AG04449 (cell line): ENCODE measurements at regions of chr2 and their contacts with region 1.

Region 1: DNA sequence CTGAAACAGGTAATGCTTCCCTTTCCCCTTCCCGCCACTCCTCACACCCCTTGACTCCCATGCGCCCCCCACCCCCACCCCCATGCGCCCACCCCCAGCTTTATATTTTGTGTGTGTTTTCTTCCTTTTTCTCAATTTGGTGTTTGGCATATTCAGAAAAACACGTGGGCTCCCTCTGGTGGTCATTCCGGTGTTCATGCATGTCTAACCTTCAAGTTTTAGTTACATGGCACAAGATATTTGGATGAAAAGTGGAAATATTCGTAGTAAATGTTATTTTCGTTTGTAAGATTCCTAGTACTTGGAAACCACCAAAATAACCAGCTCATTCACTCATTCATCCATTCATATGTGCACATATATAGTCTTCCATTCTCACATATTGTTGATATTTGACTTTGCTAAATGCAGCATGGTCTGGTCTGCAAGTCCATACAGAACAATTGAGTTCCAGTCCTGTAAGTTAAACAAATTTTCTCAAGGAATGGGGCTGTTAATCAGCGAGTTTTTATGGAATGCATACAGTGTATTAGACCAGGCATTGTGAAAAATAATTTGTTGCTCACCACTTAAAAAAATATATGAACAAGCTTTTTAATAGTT is 143.6 kb upstream of the MAP3K20 start:
- DNase-seq: no peak
- H3K4me3 ChIP-seq: no peak overlapping the region
- CTCF ChIP-seq: peak; percentile 64

Region 2: DNA sequence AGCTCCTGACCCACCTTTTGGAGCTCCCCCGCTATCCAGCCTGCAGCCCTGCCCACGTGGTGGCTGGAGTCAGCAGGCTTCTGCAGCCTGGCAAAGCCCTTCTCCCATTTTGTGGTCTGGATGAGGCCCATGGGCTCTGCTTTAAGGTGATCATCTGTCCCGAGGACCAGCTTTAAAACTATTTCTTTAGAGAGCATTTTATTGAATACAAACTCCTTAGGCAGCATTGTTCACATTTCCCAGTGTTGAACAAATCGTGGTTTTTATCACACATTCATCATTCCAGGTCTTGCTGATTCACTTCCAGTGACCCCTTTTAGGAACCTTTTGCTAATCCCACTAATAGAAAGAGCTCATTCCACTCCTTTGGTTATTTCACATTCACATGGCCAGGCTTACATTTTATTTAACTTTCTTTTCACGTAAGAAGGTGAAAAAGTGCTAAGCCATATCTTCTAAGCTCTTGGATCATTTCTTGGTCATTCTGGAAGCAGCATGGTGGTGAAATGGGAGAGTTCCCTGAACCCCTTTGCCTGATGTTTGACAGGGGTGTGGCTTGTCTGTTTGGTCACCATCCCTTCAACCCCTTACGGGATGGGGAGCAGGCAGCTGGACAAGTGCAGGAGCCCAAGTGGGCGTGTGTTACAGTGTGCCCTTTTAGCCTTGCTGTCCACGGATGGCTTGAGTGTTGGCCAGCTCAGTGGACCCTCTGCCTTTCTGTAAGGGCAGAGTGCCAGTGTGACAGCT is 276.8 kb before region 1 on chr2:
- CTCF ChIA-PET with region 1: no interaction called
- POLR2A ChIA-PET with region 1: no interaction called
- DNase-seq: peak; percentile 59
- H3K4me3 ChIP-seq: no peak overlapping the region
- CTCF ChIP-seq: no peak

Region 3: DNA sequence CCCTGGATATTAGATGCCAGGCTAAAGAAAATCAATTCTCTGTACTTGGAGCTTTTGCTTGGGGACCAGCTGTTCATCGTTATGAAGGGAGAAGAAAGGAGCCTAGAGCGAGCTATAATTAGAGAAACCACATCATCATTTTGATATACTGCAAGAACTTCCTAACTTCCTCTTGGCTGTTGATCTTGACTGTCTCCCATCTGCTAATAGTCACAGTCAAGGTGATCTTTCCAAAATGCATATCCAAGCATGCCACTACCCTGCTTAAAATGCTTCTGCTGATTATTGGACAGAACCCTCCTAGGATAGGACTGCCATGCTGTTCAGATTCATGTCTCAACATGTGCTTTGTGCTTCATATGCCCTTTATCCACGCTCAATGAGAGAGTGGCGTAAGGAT is 141.6 kb before region 1 on chr2:
- CTCF ChIA-PET with region 1: interaction called, 23 read pairs
- POLR2A ChIA-PET with region 1: no interaction called
- DNase-seq: no peak
- H3K4me3 ChIP-seq: no peak overlapping the region
- CTCF ChIP-seq: no peak

Region 4: DNA sequence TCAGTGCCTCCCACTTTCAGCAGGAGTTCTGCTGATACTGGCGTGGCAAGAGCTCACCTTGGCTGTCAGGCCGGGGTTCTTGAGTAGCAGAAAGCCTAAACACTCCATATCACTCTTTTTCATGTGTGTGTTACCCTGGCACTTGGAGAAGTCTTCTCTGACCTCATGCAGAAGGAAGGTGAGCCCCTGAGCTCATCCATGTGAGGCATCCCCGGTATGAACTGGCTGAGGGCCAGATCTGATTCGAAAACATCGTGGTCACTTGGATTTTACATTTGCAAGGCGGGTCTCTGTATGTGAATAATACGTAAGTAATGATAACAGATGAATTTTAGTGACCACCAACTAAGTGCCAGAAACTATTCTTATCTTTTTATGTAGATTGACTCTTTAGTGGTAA is 102.8 kb before region 1 on chr2:
- CTCF ChIA-PET with region 1: interaction called, 29 read pairs
- POLR2A ChIA-PET with region 1: no interaction called
- DNase-seq: peak; percentile 77
- H3K4me3 ChIP-seq: no peak overlapping the region
- CTCF ChIP-seq: no peak

Region 5: GRCh38 chr2:172869861-172870260 is 62.2 kb before region 1 on chr2:
- CTCF ChIA-PET with region 1: interaction called, 98 read pairs
- POLR2A ChIA-PET with region 1: no interaction called
- DNase-seq: no peak
- H3K4me3 ChIP-seq: no peak overlapping the region
- CTCF ChIP-seq: no peak

Region 6: GRCh38 chr2:172905937-172906811 is 25.8 kb before region 1 on chr2:
- CTCF ChIA-PET with region 1: interaction called, 37 read pairs
- POLR2A ChIA-PET with region 1: no interaction called
- DNase-seq: no peak
- H3K4me3 ChIP-seq: no peak overlapping the region
- CTCF ChIP-seq: no peak

Region 7: DNA sequence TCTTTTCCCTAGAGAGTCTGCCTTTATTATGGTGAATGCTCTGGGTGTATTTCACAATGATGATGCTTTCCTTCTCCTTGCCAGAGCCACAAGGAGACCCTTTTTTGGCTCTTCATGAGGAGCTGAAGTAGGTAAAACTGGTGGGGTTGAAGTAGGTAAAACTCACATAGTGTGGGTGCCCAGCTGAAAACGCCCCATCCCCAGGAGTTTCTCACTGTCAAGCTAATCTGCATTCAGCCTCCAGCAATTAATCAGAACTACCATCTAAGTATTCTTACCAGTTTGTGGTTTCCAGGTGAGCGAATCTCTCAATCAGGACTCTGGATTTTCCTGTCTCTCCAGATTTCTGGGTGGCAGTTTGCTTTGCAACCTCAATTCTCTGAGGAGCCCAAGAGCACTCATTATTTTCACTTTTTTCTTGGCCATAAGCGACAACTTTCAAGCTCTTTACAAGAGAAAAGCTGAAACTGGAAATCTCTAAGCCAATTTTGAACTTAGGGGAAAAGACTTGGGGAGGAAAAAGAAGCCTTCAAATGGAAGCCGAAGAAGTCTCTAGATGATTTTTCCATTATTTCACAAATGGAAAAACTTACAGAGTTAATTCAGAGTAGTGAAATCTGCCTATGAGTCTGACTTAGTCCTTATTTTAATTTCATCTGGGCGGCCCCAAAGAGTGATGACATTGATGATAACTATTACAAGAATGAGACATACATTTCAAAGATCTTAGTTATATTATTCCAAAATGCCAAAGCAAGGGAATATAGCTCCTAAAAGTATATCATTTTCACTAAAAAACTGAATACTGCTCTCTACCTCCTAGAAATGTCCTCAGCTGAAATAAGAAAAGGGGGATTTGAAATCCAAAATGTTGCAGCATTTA is 22.2 kb after region 1 on chr2:
- CTCF ChIA-PET with region 1: interaction called, 51 read pairs
- POLR2A ChIA-PET with region 1: no interaction called
- DNase-seq: no peak
- H3K4me3 ChIP-seq: no peak overlapping the region
- CTCF ChIP-seq: no peak

Region 8: DNA sequence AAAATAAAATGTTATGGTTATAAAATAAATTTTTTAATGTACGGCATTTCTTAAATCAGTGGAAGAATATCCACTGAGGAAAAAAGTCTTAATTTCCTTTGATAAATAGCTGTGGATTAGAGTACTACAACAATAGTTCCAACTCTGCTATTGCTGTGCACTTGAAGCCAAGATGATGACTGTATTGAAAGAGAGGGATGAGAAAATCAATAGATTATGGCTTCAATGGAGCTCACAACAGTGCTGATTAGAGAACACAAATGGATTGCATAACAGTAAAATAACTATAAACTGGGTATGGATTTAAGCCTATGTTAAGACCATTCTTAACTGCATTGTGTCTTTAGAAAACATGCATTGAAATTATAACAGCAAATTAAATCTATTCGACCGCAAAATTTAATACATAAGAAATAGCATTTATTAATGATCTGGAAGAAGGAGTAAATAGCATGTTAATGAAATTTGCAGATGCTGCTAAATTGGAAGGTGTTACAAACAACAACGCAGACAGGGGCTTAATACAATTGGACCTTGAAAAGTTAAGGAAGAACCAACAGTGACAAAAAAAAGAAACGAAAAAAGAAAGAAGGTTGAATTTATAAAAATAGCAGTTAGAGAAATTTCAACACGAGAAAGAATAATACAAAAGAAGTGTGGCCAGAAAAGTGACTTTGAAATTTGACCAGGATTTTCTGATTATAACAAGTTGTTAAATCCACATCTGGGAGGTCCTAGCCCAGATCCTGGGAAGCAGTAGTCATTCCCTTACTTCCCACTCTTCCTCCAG is 135.1 kb after region 1 on chr2:
- CTCF ChIA-PET with region 1: no interaction called
- POLR2A ChIA-PET with region 1: no interaction called
- DNase-seq: no peak
- H3K4me3 ChIP-seq: no peak overlapping the region
- CTCF ChIP-seq: no peak

Region 9: GRCh38 chr2:173218326-173219056 is 286.5 kb after region 1 on chr2:
- CTCF ChIA-PET with region 1: interaction called, 10 read pairs
- POLR2A ChIA-PET with region 1: no interaction called
- DNase-seq: no peak
- H3K4me3 ChIP-seq: no peak overlapping the region
- CTCF ChIP-seq: no peak